Esophagus muscularis mucosa (tissue), 4 donors: ENCODE measurements at regions of chr1 and their contacts with region 1.

Region 1: DNA sequence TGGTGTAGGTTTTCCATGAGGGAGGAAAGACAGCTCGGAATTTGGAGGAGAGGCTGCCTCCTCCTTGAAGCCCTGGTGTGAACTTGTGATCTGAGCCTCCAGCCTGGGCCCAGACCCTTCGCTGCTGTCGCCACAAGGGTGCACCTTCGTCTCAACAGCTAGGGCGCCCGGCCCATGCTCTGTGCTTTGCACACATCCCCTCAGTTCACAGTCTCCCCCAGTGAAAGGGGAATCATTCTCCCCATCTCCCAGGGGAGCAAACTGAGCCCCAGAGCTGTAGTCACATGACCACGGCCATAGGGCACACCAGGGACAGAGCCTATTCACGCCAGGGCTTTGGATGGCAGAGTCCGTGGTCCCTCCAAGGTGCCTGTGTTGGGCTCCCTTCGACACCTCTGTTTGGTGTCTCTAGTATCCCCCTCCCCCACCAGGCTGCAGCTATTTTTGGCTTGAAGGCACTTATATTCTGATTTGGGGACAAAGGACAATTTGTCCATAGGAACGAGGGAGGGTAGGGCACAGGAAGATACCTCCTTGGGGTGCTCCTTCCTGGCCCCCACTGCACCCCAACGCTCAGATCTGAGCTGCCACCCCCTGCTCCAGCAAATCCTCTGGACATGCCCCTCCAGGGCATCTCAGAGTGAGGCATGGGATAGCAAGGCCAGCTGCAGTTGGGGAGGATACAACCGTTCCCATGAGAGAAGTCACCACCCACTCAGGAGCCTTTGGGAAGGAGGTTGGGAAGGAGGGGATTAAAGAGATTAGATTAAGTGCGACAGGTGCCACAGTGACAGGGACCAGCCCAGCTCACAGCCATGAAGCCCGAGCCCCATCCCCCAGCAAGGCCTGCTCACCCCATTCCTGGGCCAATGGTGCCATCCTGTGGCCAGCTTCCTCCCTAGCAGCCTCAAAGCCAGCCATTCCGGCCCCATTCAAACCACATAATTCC is 15.7 kb downstream of the MATN1 start:
- DNase-seq: no peak
- H3K4me3 ChIP-seq: no peak overlapping the region
- H3K27ac ChIP-seq: no peak overlapping the region
- H3K4me1 ChIP-seq: peaks cover 16 to 41% (median 32%) of the 10 kb centered on the region in 4 donors
- H3K27me3 ChIP-seq: no peaks in the 10 kb centered on the region
- CTCF ChIP-seq: peak; percentile 69 to 97 (median 83)
- EP300 ChIP-seq: no peak
- POLR2A ChIP-seq: no peak

Region 2: GRCh38 chr1:28877132-28877781 is 1830.4 kb before region 1 on chr1:
- intact Hi-C with region 1: loop called (anchors 10 kb)
- DNase-seq: peak; percentile 94
- H3K4me3 ChIP-seq: no peak overlapping the region
- H3K27ac ChIP-seq: no peak overlapping the region
- H3K4me1 ChIP-seq: peaks cover 0 to 12% (median 4%) of the 10 kb centered on the region in 4 donors
- H3K27me3 ChIP-seq: peaks cover 0 to 8% (median 0%) of the 10 kb centered on the region in 4 donors
- CTCF ChIP-seq: peak; percentile 87 to 96 (median 91)
- EP300 ChIP-seq: no peak
- POLR2A ChIP-seq: no peak

Region 3: GRCh38 chr1:29793101-29793546 is 914.6 kb before region 1 on chr1:
- intact Hi-C with region 1: loop called (anchors 5 kb)
- DNase-seq: peak; percentile 94
- H3K4me3 ChIP-seq: no peak overlapping the region
- H3K27ac ChIP-seq: no peak overlapping the region
- H3K4me1 ChIP-seq: no peaks in the 10 kb centered on the region
- H3K27me3 ChIP-seq: peaks cover 0 to 27% (median 0%) of the 10 kb centered on the region in 4 donors
- CTCF ChIP-seq: peak; percentile 59 to 80 (median 68)
- EP300 ChIP-seq: no peak
- POLR2A ChIP-seq: no peak

Region 4: DNA sequence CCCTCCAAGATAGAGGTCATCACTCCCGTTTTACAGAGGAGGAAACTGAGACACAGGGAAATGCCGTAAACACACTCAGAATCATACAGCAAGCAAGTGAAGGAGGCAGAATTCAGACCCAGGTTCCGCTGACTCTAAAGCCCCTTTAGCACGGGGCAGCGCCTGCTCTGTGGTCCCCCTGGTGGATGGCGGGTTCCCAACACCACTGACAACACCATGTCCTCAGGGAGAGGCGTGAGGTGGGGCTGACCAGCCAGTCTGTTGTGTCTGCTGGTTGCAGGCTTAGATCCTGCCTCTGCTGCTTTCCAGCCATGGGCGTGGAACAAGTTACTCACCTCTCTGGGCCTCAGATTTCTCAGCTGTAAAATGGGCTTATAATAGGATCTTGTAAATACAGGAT is 601.6 kb before region 1 on chr1:
- intact Hi-C with region 1: loop called (anchors 10 kb)
- DNase-seq: no peak
- H3K4me3 ChIP-seq: no peak overlapping the region
- H3K27ac ChIP-seq: no peak overlapping the region
- H3K4me1 ChIP-seq: peaks cover 0 to 5% (median 0%) of the 10 kb centered on the region in 4 donors
- H3K27me3 ChIP-seq: peaks cover 0 to 90% (median 0%) of the 10 kb centered on the region in 4 donors
- CTCF ChIP-seq: peak in 2 of 3 experiments; percentile 31 to 49
- EP300 ChIP-seq: no peak
- POLR2A ChIP-seq: no peak

Region 5: GRCh38 chr1:30379684-30380624 is 327.7 kb before region 1 on chr1:
- intact Hi-C with region 1: loop called (anchors 5 kb)
- DNase-seq: no peak
- H3K4me3 ChIP-seq: no peak overlapping the region
- H3K27ac ChIP-seq: no peak overlapping the region
- H3K4me1 ChIP-seq: peaks cover 0 to 8% (median 7%) of the 10 kb centered on the region in 4 donors
- H3K27me3 ChIP-seq: peaks cover 0 to 82% (median 6%) of the 10 kb centered on the region in 4 donors
- CTCF ChIP-seq: peak; percentile 71 to 88 (median 80)
- EP300 ChIP-seq: no peak
- POLR2A ChIP-seq: no peak